Ascending aorta (tissue), 2 donors: ENCODE measurements at regions of chr1 and their contacts with region 1.

Region 1: DNA sequence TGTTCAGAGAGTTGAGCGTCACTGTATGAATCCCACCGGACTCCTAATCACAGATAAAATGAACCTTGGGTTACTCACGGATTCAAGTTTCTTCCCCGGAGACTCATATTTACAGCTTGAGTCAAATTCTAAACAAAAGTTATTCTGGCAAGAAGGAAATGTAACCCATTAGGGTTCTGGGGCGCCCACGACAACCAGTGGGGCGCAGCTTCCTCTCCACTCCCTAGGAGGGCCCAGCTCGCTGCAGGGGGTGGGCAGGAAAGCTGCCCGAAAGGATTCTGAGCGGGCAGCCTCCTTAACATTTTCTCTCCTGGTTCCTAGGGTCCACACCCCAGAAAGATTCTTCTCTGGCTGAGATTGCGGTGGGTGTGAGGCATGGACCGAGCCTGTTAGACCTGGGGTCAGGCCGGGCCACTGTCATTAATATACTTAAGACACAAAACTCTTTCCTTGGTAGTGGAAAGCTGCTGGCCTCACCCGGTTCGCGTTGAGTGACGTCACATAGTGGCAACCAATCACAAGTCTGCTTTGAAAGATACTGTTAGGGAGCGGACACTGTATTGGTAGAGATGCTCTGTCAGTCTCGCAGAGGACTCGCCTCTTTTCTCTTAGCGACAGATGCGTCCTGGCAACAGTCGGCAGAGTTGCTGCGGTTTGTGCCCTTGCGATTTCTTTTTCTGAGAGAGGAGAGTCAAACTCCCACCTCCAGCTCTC is 13.6 kb upstream of the MCOLN3 start:
- DNase-seq: peak; percentile 57 to 96
- H3K4me3 ChIP-seq: peak overlapping the region; percentile 28 to 66
- H3K27ac ChIP-seq: peak overlapping the region in 1 of 2 donors; percentile 44
- H3K4me1 ChIP-seq: peaks cover 0 to 3% of the 10 kb centered on the region in 2 donors
- H3K27me3 ChIP-seq: no peaks in the 10 kb centered on the region
- CTCF ChIP-seq: no peak

Region 2: GRCh38 chr1:85200870-85201339 is 139.0 kb after region 1 on chr1 and contains the start of gene SYDE2:
- intact Hi-C with region 1: loop called (anchors 2 kb)
- DNase-seq: peak; percentile 47 to 88
- H3K4me3 ChIP-seq: peak within 1 kb of the TSS; percentile 76 to 99
- H3K27ac ChIP-seq: peak within 1 kb of the TSS; percentile 96 to 98
- H3K4me1 ChIP-seq: peaks cover 0 to 6% of the 10 kb centered on the region in 2 donors
- H3K27me3 ChIP-seq: no peaks in the 10 kb centered on the region
- CTCF ChIP-seq: no peak
- total RNA-seq, gene SYDE2: 0.43 TPM

Region 3: DNA sequence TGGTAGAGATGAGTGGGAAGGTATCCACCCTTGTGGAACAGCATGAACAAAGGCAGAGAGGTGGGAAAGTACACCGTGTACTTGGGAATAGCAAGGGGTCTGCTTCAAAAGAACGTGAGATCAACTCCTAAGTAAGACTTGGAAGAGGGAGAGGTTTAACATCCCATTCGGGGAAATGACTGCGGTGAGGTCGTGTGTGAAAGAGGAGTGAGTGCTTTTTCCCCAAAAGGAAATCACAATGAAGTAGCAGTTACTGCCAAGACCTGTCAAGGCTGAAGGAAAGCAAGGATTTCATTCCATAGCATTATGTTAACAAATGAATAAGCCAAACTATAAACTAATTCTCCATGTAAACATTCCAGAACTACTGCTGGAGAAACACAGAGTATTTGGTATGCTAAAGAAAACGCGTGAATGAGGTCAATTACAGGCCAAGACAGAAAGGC is 158.9 kb after region 1 on chr1:
- intact Hi-C with region 1: no loop called
- DNase-seq: no peak
- H3K4me3 ChIP-seq: no peak overlapping the region
- H3K27ac ChIP-seq: peak overlapping the region; percentile 39 to 59
- H3K4me1 ChIP-seq: peaks cover 3 to 10% of the 10 kb centered on the region in 2 donors
- H3K27me3 ChIP-seq: no peaks in the 10 kb centered on the region
- CTCF ChIP-seq: no peak